Activated CD4-positive, alpha-beta T cell treated with anti-CD3 and anti-CD28 coated beads for 36 hours (primary cell): ENCODE measurements at regions of chr1 and their contacts with region 1.

Region 1: DNA sequence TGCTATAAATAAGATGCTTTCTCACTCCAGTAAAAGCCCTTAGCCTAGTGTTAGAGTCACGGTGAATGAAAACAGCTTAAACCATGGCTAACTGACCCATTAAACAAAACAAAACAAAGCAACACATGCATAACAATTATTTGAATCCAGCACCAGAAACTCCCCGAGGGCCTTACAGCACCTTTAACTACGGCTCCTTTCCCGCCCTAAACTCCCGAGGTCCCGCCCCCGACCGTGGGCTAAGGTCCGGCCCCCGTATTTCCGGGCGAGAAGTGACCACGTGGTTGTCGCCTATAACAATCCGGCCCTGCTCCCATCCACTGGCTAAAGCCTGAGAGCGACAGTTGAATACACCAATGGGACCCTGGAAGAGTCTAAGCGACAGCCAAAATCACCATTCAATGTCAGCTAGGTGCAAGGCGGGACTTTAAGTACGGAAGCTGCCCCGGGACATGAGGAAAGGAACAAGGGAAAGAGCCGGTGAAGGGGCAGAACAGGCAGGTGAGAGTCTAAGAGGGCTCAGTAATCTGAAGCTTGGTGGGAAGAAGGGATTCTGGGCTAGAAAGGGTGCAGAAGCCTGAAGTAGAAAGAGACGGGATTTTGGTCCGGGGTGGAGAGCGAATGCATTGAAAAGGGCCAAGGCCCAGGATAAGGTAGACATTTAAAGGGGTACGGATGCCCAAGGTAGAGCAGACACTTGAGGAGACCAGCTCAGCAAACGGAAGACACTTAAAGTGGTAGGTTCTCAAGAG is at the start of gene FLAD1:
- DNase-seq: peak; percentile 97
- ATAC-seq: peak; percentile 99
- H3K4me3 Mint-ChIP-seq: no peak within 1 kb of the TSS
- H3K27ac Mint-ChIP-seq: no peak within 1 kb of the TSS
- H3K4me1 Mint-ChIP-seq: peaks cover 21% of the 10 kb centered on the region
- H3K27me3 Mint-ChIP-seq: no peaks in the 10 kb centered on the region
- total RNA-seq, gene FLAD1: 38.0 to 42.4 TPM

Region 2: GRCh38 chr1:154955718-154956543 is 27.1 kb before region 1 on chr1 and contains the start of gene PBXIP1:
- CTCF ChIA-PET with region 1: interaction called, 7 read pairs
- POLR2A ChIA-PET with region 1: interaction called, 4 read pairs
- intact Hi-C with region 1: loop called in 1 of 2 experiments (anchors 1 kb)
- DNase-seq: peak; percentile 83
- ATAC-seq: peak; percentile 54
- H3K4me3 Mint-ChIP-seq: peak within 1 kb of the TSS; percentile 85
- H3K27ac Mint-ChIP-seq: peak within 1 kb of the TSS; percentile 95
- H3K4me1 Mint-ChIP-seq: peaks cover 82% of the 10 kb centered on the region
- H3K27me3 Mint-ChIP-seq: no peaks in the 10 kb centered on the region
- total RNA-seq, gene PBXIP1: 22.6 to 28.1 TPM

Region 3: DNA sequence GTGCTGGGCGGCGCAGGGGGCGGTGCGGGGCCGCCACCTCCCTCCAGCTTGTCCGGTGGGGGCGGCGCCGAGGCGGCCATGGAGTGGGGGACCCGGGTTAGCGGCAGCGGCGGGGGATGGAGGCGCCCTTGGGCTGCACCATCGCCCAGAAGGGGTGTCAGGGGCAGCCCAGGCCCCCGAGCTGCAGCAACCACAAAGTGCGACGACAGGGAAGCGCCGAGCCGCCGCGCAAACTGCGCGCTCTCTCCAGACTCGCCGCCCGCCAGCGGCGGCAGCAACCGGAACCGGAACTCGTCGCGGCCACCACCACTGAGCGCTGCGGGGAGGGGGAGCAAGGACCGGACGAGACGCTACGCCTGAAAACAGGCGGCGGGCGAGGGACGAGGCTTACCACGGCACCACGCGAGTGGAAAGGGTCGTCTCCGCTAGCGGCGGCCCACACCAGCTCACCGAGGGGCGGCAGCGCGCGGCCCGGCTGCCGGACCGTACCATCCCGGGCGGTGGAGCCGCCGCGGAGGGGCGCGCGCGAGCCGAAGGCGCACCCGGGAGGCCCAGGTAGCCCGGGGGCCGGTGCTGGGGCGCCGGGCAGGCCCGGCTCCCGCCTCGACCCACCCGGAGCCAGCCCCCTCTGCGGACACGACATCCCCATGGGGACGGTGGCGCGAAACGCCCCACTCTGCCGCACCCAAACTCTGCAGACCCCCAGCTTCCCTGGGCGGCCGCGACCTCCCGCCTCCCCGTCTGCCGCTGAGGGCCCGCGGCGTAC is 21.4 kb before region 1 on chr1 and contains the start of gene PYGO2:
- CTCF ChIA-PET with region 1: interaction called, 3 read pairs
- POLR2A ChIA-PET with region 1: interaction called, 4 read pairs
- intact Hi-C with region 1: loop called in 1 of 2 experiments (anchors 1 kb)
- DNase-seq: peak; percentile 90
- ATAC-seq: peak; percentile 81
- H3K4me3 Mint-ChIP-seq: peak within 1 kb of the TSS; percentile 91
- H3K27ac Mint-ChIP-seq: peak within 1 kb of the TSS; percentile 93
- H3K4me1 Mint-ChIP-seq: peaks cover 43% of the 10 kb centered on the region
- H3K27me3 Mint-ChIP-seq: no peaks in the 10 kb centered on the region
- total RNA-seq, gene PYGO2: 24.5 to 25.6 TPM

Region 4: GRCh38 chr1:155017041-155017945 is 34.2 kb after region 1 on chr1:
- CTCF ChIA-PET with region 1: interaction called, 25 read pairs
- POLR2A ChIA-PET with region 1: interaction called, 10 read pairs
- intact Hi-C with region 1: loop called in 1 of 2 experiments (anchors 1 kb)
- DNase-seq: peak; percentile 97
- ATAC-seq: peak; percentile 87
- H3K4me3 Mint-ChIP-seq: peak overlapping the region; percentile 53
- H3K27ac Mint-ChIP-seq: peak overlapping the region; percentile 69
- H3K4me1 Mint-ChIP-seq: peaks cover 69% of the 10 kb centered on the region
- H3K27me3 Mint-ChIP-seq: no peaks in the 10 kb centered on the region

Region 5: GRCh38 chr1:155050560-155051341 is 67.7 kb after region 1 on chr1 and contains the start of gene ADAM15:
- CTCF ChIA-PET with region 1: interaction called, 5 read pairs
- POLR2A ChIA-PET with region 1: no interaction called
- intact Hi-C with region 1: loop called (anchors 1 to 5 kb)
- DNase-seq: peak; percentile 90
- ATAC-seq: peak; percentile 78
- H3K4me3 Mint-ChIP-seq: peak within 1 kb of the TSS; percentile 74
- H3K27ac Mint-ChIP-seq: peak within 1 kb of the TSS; percentile 80
- H3K4me1 Mint-ChIP-seq: peaks cover 20% of the 10 kb centered on the region
- H3K27me3 Mint-ChIP-seq: no peaks in the 10 kb centered on the region
- total RNA-seq, gene ADAM15: 42.4 to 48.8 TPM

Region 6: DNA sequence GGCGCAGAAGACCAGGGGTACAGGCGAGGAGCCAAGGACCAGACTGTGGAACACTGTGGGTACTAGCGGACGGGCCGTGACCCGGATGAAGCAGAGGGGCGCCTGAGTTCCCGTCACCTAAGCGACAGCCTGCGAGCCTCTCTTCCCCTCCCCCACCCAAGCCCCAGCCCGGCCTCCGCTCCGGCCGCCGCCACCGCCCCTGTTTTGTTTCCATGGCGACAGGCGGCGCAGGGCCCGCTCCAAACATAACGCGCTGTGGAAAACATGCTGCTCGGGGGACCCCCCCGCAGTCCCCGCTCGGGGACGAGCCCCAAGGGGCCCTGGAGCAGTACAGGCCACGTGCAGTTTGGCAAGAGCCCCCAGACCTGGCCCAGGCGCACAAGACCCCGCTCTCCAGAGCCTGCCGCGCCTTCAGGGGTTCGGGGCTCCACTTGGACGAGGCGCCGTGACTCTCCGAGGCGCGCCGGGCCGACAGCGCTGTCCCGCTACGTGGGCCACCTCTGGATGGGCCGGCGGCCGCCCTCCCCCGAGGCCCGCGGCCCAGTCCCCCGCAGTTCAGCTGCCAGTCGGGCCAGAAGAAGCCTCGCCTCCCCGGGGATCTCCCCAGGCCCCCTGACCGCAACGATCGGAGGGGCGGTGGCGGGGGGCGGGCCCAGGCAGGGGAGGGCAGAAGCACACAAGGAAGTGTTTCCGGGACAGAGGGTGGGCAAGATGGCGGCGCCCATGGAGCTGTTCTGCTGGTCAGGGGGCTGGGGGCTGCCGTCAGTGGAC is 225.7 kb after region 1 on chr1 and contains the start of gene MTX1:
- CTCF ChIA-PET with region 1: no interaction called
- POLR2A ChIA-PET with region 1: no interaction called
- intact Hi-C with region 1: no loop called
- DNase-seq: peak; percentile 93
- ATAC-seq: peak; percentile 87
- H3K4me3 Mint-ChIP-seq: peak within 1 kb of the TSS; percentile 89
- H3K27ac Mint-ChIP-seq: peak within 1 kb of the TSS; percentile 86
- H3K4me1 Mint-ChIP-seq: peaks cover 29% of the 10 kb centered on the region
- H3K27me3 Mint-ChIP-seq: no peaks in the 10 kb centered on the region
- total RNA-seq, gene MTX1: 52.8 to 52.9 TPM

Region 7: GRCh38 chr1:155277070-155277895 is 294.2 kb after region 1 on chr1 and contains the start of gene HCN3:
- CTCF ChIA-PET with region 1: no interaction called
- POLR2A ChIA-PET with region 1: no interaction called
- intact Hi-C with region 1: no loop called
- DNase-seq: peak; percentile 97
- ATAC-seq: peak; percentile 68
- H3K4me3 Mint-ChIP-seq: peak within 1 kb of the TSS; percentile 63
- H3K27ac Mint-ChIP-seq: no peak within 1 kb of the TSS
- H3K4me1 Mint-ChIP-seq: peaks cover 31% of the 10 kb centered on the region
- H3K27me3 Mint-ChIP-seq: no peaks in the 10 kb centered on the region
- total RNA-seq, gene HCN3: 1.9 to 2.3 TPM